ENCODE measurements at regions of chr3 and their contacts with region 1.

Region 1: DNA sequence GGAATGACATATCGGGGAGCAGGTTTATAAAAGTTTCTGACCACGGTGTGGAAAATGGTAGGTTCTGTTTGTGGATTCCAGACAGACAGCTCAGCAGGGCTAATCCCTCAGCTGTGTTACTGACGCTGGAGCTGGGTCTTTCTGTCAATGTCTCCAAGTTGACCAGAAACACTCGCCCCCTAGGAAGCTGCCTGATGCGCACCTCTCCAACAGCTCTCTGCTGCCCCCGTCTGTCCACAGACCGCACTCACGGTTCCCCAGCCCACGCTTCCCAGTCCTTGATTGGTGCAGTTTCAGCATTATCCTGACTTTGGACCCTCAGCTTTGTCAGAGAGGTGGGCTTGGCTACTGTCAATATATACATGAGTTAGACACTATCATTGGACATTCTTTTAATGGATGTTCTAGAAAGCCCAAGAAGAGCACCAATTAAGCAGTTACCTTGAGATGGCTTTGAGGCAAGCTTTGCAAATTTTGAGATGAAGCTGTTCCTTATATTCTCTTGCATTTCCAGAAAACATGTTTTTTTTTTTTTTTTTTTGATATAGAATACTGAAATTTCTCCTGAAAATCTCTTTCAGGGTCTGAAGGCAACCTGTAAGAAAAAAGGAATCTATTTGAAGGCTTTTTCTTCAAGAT is 98.9 kb upstream of the TBC1D5 start:
- DNase-seq: peak in 9 of 10 donors; percentile 42 to 81 (median 66)
- H3K4me3 ChIP-seq: peak overlapping the region in 1 of 59 donors; percentile 29
- H3K27ac ChIP-seq: peak overlapping the region in 7 of 59 donors; percentile 31 to 56 (median 37)
- H3K27me3 ChIP-seq: no peaks in the 10 kb centered on the region
- CTCF ChIP-seq: peak in 55 of 56 donors; percentile 43 to 97 (median 89)

Region 2: DNA sequence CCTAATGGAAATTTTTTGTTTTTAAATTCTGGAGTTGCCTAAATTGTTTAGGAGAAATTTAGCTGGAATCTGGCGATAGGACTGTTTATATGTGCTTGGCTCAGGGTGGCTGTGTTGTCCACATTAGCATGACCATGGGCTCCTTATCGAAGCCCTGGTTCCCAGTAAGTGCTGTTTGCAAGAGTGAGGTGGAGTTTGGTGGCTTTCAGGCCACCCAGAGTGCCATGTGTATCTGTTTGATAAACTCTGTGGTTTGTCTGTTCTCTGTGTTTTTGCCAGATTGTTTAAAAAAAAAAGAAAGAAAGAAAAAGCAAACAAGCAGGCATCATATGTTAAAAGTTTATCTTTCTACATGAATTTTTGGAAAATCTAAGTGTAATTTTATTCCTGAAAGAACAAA is 905.1 kb before region 1 on chr3:
- intact Hi-C with region 1: no loop called
- DNase-seq: no peak
- H3K4me3 ChIP-seq: no peak overlapping the region
- H3K27ac ChIP-seq: no peak overlapping the region
- H3K27me3 ChIP-seq: no peaks in the 10 kb centered on the region
- CTCF ChIP-seq: no peak

Region 3: DNA sequence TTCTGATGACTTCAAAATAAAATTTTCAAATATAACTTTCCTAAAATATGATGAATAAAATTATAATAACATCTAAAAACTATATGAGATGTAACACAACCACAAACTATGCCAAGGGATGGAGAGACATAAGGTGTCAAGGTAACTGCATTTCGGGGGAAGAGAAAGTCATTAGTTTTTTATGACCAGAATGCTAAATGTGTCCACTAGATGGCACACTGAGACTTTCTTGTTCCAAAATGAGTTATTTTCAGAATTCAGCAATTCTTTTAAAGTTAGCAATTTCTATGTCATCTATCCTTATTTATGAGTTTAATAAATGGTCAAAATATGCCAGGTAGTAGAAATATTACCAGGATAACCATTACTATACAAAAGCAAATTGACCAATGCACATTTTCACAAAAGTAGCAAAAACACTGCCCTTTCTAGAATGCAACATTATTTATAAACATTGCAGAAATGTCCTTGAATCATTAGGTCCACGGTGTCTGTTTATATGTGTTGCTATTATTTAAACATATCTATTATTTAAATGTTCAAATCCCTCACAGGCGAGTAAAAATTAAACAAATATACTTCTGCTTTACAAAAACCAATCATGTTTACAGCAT is 582.4 kb before region 1 on chr3:
- intact Hi-C with region 1: loop called in 1 of 2 experiments (anchors 5 kb)
- DNase-seq: no peak
- H3K4me3 ChIP-seq: no peak overlapping the region
- H3K27ac ChIP-seq: peak overlapping the region in 1 of 59 donors; percentile 10
- H3K27me3 ChIP-seq: no peaks in the 10 kb centered on the region
- CTCF ChIP-seq: peak; percentile 59 to 97 (median 87)

Region 4: GRCh38 chr3:17431004-17431403 is 410.3 kb before region 1 on chr3:
- intact Hi-C with region 1: loop called (anchors 2 to 5 kb)
- DNase-seq: no peak
- H3K4me3 ChIP-seq: peak overlapping the region in 5 of 59 donors; percentile 6 to 26 (median 15)
- H3K27ac ChIP-seq: peak overlapping the region in 2 of 59 donors; percentile 2 to 3
- H3K27me3 ChIP-seq: no peaks in the 10 kb centered on the region
- CTCF ChIP-seq: peak; percentile 14 to 86 (median 64)

Region 5: GRCh38 chr3:17645072-17645698 is 196.1 kb before region 1 on chr3:
- intact Hi-C with region 1: loop called (anchors 1 to 10 kb)
- DNase-seq: peak in 1 of 10 donors; percentile 18
- H3K4me3 ChIP-seq: peak overlapping the region in 4 of 59 donors; percentile 8 to 17 (median 16)
- H3K27ac ChIP-seq: peak overlapping the region in 46 of 59 donors; percentile 2 to 75 (median 35)
- H3K27me3 ChIP-seq: no peaks in the 10 kb centered on the region
- CTCF ChIP-seq: peak; percentile 65 to 92 (median 80)

Region 6: DNA sequence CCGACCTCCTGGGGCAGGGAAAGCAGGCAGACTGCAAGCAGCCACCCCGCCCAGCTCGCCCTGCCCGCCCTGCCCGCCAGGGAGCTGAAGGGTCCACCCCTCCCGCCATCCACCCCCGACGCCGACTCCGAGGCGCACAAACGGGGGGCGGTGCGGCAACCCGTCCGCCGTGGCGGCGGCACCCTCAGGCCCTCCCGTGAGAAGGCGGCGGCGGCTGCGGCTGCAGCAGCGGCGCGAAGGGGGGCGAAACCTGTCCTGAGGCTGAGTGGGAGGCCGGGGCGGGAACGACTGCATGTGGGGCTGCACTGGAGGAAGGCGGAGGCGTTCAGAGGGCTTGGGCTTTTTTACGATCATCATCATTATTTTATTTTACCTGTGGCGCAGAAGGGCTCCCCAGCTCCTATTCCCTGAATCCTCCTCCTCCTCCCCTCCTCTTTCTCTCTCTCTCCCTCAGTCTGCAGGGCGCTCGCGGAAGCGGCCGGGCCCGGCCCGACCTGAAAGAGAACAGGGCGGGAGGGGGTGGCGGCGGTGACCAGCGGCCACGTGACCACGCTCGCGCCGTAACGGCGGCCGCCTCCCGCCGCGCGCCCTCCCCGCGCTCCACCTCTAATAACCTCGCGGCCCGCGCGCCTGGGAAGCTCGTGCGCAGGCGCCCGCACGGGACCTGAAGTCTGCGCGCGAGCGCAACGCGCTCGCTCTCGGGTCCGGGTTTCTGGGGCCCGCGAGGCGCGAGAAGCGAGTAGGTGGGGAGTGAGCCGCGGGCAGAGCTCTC is 99.0 kb before region 1 on chr3 and contains the start of gene TBC1D5:
- intact Hi-C with region 1: loop called (anchors 5 to 10 kb)
- DNase-seq: peak; percentile 58 to 97 (median 94)
- H3K4me3 ChIP-seq: peak within 1 kb of the TSS; percentile 66 to 97 (median 86)
- H3K27ac ChIP-seq: peak within 1 kb of the TSS; percentile 88 to 100 (median 98)
- H3K27me3 ChIP-seq: no peaks in the 10 kb centered on the region
- CTCF ChIP-seq: peak in 20 of 56 donors; percentile 2 to 35 (median 18)
- total RNA-seq, gene TBC1D5: 66.1 to 103 (median 87.1) TPM

Region 7: DNA sequence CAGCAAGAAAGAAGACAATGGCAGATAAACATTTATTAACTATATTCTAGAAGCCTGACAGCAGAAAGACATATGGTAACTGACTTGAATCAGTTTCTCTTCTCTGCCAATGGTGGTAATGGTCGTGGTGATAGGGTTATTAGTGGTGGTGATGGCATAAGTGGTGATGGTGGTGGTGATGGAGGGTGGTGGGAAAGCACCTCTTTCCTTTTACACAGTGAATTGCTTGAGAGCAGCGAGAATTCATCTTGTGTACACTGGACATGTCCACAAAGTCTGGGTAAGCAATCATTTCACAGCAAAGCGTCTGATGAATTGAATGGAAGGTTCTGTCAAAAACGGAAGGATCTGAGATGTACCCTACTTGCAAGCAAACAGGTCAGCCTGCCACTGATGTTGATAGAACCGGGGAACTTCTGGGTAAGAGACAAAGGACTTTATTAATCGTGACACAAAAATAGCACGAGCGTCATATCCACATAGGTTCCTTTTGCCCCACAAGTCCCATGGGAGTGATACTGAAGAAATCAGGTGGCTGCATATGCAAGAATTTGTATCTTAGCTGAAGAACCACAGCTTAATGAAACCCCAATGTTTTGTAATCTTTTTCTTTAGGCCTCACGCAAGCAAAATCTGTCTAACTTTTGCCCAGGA is 75.4 kb before region 1 on chr3:
- intact Hi-C with region 1: no loop called
- DNase-seq: no peak
- H3K4me3 ChIP-seq: no peak overlapping the region
- H3K27ac ChIP-seq: no peak overlapping the region
- H3K27me3 ChIP-seq: no peaks in the 10 kb centered on the region
- CTCF ChIP-seq: no peak

Region 8: DNA sequence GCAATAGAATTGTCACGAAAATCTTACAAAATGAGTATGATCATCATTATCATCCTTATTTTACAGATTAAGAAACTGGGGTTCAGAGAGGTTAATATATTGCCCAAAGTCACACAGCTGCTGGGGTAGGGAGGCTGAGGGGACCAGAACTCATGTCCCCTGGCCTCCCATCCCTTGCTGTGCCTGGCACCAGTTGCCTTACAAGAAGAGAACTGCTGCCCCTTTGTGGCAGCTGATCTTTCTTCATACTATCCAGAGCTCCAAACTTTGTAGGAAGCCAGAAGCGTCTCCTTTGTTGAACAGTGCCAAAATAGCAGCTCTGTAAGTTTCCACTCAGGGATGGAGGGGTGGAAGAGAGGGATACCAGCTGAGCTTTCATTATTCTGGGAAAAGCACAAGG is 137.9 kb after region 1 on chr3:
- intact Hi-C with region 1: loop called in 1 of 2 experiments (anchors 10 kb)
- DNase-seq: peak in 7 of 10 donors; percentile 9 to 68 (median 41)
- H3K4me3 ChIP-seq: no peak overlapping the region
- H3K27ac ChIP-seq: peak overlapping the region in 22 of 59 donors; percentile 1 to 76 (median 48)
- H3K27me3 ChIP-seq: no peaks in the 10 kb centered on the region
- CTCF ChIP-seq: peak in 53 of 56 donors; percentile 9 to 65 (median 44)

Region 9: GRCh38 chr3:18153571-18154173 is 312.4 kb after region 1 on chr3:
- intact Hi-C with region 1: no loop called
- DNase-seq: no peak
- H3K4me3 ChIP-seq: no peak overlapping the region
- H3K27ac ChIP-seq: peak overlapping the region in 1 of 59 donors; percentile 35
- H3K27me3 ChIP-seq: no peaks in the 10 kb centered on the region
- CTCF ChIP-seq: no peak

Measured in dorsolateral prefrontal cortex (tissue), 120 donors.